PC-9 (cell line): ENCODE measurements at regions of chr10 and their contacts with region 1.

Region 1: DNA sequence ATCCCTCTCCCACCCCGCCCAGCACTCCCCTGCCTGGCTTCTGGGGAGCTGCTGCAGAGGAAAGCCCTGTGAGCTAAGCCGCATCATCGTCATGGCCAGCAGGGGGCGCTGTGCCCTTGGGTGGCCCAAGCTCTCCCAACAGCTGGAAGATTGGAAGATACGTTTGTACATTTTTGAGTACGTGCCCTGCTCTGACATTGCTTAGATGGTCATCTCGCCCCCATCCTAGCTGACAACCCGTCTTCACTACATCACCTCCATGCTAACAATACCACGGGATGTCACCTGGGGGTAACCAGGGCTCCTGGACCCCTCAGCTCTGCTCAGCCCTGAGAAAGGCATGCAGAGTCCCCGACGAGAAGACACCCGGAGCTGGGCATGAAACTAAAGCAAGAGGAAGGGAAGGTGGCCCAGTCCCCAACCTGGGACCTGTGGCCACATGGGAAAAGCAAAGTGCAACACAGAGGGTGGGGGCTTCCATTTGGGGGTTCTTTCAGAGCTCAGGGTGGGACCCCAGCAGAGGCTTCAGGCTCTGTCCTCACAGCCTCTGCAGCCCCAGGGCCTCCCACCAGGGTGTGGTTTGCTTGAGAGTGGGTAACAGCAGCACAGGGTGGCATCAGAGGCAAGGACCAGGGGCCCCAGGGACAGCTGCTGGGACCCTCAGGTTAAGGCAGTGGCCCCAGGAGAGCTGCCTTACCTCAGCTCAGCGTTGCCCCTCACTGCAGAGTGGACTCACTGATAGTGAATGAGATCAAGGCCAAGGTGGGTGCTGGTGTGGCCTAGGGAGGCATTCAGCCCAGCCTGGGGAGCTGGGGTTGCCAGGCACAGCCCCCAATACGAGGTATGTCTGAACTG is 136.7 kb downstream of the PTPN20 start:
- DNase-seq: peak in 1 of 2 experiments; percentile 84
- H3K4me3 ChIP-seq: no peak overlapping the region
- H3K27ac ChIP-seq: no peak overlapping the region
- H3K4me1 ChIP-seq: no peaks in the 10 kb centered on the region
- H3K27me3 ChIP-seq: no peaks in the 10 kb centered on the region
- CTCF ChIP-seq: peak; percentile 97

Region 2: GRCh38 chr10:47137311-47137851 is 89.5 kb after region 1 on chr10:
- CTCF ChIA-PET with region 1: no interaction called
- POLR2A ChIA-PET with region 1: no interaction called
- intact Hi-C with region 1: no loop called
- DNase-seq: peak; percentile 19 to 88
- H3K4me3 ChIP-seq: peak overlapping the region; percentile 40; the same call in 1 of the 2 replicates
- H3K27ac ChIP-seq: peak overlapping the region; percentile 53
- H3K4me1 ChIP-seq: peaks cover 41% of the 10 kb centered on the region
- H3K27me3 ChIP-seq: no peaks in the 10 kb centered on the region
- CTCF ChIP-seq: no peak

Region 3: DNA sequence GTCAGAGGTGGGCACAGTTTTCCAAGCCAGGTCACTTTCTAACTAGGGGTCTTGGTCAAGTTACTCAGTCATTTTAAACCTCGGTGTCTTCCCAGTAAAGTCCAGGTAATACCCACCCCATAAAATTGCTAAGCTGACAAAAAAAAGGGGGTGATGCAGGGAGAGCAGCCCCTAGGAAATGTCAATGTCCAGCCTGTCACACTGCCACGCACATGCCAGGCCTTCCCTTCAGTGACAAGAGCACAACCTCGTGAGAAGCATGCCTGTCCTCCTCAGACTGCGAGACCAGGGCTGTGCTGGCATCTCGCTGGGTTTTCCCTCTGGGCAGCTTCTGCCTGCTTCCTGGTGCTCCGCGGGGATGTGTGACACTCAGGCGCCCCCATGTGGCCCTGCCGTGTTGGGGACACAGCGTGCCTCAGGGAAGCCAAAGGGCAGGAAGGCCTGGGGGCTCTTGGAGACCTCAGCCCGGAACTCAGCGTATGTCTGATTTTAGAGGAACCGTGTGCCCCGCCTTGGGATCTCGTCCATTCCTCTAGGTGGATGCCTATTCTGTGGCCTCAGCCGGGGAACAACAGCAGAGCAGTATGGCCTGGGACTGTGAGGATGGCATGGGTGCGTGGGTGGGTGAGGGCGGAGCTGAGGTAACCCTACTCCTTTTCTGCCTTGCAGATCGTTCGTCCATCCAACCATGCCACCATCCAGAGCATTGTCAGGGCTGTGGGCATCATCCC is 264.2 kb after region 1 on chr10:
- CTCF ChIA-PET with region 1: interaction called, 31 read pairs
- POLR2A ChIA-PET with region 1: no interaction called
- intact Hi-C with region 1: loop called (anchors 1 kb)
- DNase-seq: peak; percentile 71 to 89
- H3K4me3 ChIP-seq: no peak overlapping the region
- H3K27ac ChIP-seq: no peak overlapping the region
- H3K4me1 ChIP-seq: peaks cover 8% of the 10 kb centered on the region
- H3K27me3 ChIP-seq: no peaks in the 10 kb centered on the region
- CTCF ChIP-seq: peak; percentile 95